Naive thymus-derived CD8-positive, alpha-beta T cell (primary cell): ENCODE measurements at regions of chr1 and their contacts with region 1.

Region 1: GRCh38 chr1:65048335-65048734 is 82.0 kb upstream of the JAK1 start:
- DNase-seq: no peak
- ATAC-seq: no peak
- H3K4me3 Mint-ChIP-seq: no peak overlapping the region
- H3K27ac Mint-ChIP-seq: peak overlapping the region in 6 of 10 donors; percentile 5 to 82 (median 37)
- H3K4me1 Mint-ChIP-seq: peaks cover 39 to 68% (median 55%) of the 10 kb centered on the region in 4 donors
- H3K27me3 Mint-ChIP-seq: no peaks in the 10 kb centered on the region

Region 2: DNA sequence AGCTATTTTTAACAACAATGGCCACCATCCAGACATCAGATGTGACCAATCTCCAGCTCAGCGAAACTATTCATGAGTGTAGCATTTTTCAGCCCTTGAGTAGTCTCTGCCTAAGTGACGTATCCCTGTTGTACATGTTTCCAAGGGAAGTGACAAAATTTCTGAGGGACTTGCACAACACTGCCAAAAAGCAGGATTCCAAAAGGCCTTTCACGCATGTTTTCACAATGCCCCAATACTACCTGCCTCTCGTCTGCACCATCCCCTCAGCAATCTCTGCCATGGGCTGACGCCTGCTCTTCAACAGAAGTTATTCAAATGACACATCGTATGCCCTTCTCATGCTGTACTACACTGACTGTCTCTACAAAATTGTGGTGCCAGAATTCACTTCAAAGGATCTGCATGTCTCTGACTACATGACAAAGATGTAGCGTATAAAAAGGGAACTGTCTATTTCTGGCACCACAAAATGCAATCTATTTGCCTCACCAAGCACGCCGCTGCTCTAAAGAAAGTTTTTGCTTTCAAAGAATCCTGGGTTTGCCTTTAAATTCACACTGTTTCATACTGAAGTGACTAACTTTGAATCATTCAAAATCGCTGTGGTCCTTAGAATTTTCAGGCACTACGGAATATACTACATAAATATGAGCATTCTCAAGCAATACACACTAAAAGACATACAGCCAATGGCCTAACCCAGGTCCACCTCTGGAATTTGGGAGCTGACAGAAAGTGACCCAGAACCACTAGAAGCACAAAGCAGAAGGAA is 114.9 kb before region 1 on chr1:
- POLR2A ChIA-PET with region 1: no interaction called
- DNase-seq: peak in 5 of 10 donors; percentile 16 to 39 (median 35)
- ATAC-seq: peak; percentile 74 to 87
- H3K4me3 Mint-ChIP-seq: peak overlapping the region; percentile 16 to 73 (median 62)
- H3K27ac Mint-ChIP-seq: peak overlapping the region; percentile 8 to 78 (median 68)
- H3K4me1 Mint-ChIP-seq: peaks cover 42 to 93% (median 86%) of the 10 kb centered on the region in 4 donors
- H3K27me3 Mint-ChIP-seq: no peaks in the 10 kb centered on the region

Region 3: GRCh38 chr1:65067491-65068201 is 19.3 kb after region 1 on chr1:
- POLR2A ChIA-PET with region 1: interaction called, 30 read pairs
- DNase-seq: peak; percentile 35 to 85 (median 68)
- ATAC-seq: peak; percentile 33 to 45
- H3K4me3 Mint-ChIP-seq: peak overlapping the region; percentile 88 to 98 (median 94)
- H3K27ac Mint-ChIP-seq: peak overlapping the region; percentile 97 to 100 (median 98)
- H3K4me1 Mint-ChIP-seq: peaks cover 31 to 65% (median 59%) of the 10 kb centered on the region in 4 donors
- H3K27me3 Mint-ChIP-seq: no peaks in the 10 kb centered on the region